HEK293 (cell line): ENCODE measurements at regions of chr7 and their contacts with region 1.

Region 1: DNA sequence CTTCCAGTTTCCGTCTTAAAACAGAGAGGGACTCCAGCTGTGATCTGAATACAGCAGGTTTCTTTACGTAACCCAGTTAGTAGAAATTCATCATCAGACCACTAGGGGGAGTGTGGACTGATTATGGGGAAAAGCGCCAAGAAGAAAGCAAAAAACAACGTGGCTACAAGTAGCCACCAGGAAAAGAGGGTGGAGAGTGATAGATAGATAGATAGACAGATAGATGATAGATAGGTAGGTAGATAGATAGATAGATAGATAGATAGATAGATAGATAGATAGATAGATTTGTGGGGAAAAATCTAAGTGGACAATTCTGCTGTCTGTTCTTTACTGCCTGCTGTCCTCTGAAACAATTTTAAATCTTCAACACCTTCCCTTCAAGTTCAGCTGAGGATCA is 12.7 kb upstream of the AKR1B10 start:
- H3K4me3 ChIP-seq: no peak overlapping the region
- H3K27ac ChIP-seq: no peak overlapping the region
- H3K4me1 ChIP-seq: no peaks in the 10 kb centered on the region
- CTCF ChIP-seq: peak; percentile 66; the same call in 1 of the 2 replicates

Region 2: DNA sequence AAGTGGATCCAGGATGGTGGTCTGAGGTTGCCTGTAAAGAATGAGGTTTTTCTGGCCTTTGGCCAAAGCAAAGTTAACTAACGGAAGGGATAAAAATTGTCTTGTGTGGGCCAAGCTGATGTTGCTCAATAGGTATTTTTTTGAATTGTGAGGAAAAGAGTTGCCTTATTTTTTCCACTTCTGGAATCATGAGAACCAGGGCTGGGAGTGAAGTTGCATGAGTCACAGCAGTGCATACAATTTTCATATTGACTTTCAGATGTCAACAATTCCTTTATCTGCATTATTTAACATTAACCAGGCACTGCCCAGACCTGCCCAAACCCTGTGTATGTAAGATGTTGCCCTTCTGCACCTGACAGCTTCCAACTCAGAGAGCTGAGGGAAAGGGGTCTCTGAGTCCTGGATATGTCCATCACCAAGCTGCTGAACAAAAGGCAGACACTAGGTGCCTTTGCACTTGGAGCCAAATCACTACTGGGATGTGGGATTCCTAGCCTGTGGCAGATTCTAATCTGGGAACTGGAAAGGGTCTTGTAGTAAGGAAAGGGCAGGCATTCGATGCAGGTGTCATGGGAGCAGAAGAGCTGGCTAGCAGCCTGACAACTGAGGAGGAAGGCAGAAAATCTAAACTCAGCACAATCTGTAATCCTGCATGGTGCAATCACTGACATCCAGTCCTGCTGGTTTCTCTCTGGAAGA is 145.7 kb before region 1 on chr7:
- CTCF ChIA-PET with region 1: no interaction called
- POLR2A ChIA-PET with region 1: no interaction called
- H3K4me3 ChIP-seq: no peak overlapping the region
- H3K27ac ChIP-seq: no peak overlapping the region
- H3K4me1 ChIP-seq: no peaks in the 10 kb centered on the region
- CTCF ChIP-seq: no peak

Region 3: GRCh38 chr7:134458806-134459698 is 55.6 kb before region 1 on chr7 and contains the start of gene AKR1B1:
- CTCF ChIA-PET with region 1: interaction called, 10 read pairs
- POLR2A ChIA-PET with region 1: no interaction called
- H3K4me3 ChIP-seq: peak within 1 kb of the TSS; percentile 82
- H3K27ac ChIP-seq: peak within 1 kb of the TSS; percentile 56; the same call in 1 of the 2 replicates
- H3K4me1 ChIP-seq: no peaks in the 10 kb centered on the region
- CTCF ChIP-seq: peak; percentile 88

Region 4: GRCh38 chr7:134547397-134548054 is 32.9 kb after region 1 on chr7:
- CTCF ChIA-PET with region 1: interaction called, 30 read pairs
- POLR2A ChIA-PET with region 1: no interaction called
- H3K4me3 ChIP-seq: peak overlapping the region; percentile 30
- H3K27ac ChIP-seq: no peak overlapping the region
- H3K4me1 ChIP-seq: no peaks in the 10 kb centered on the region
- CTCF ChIP-seq: peak; percentile 69

Region 5: DNA sequence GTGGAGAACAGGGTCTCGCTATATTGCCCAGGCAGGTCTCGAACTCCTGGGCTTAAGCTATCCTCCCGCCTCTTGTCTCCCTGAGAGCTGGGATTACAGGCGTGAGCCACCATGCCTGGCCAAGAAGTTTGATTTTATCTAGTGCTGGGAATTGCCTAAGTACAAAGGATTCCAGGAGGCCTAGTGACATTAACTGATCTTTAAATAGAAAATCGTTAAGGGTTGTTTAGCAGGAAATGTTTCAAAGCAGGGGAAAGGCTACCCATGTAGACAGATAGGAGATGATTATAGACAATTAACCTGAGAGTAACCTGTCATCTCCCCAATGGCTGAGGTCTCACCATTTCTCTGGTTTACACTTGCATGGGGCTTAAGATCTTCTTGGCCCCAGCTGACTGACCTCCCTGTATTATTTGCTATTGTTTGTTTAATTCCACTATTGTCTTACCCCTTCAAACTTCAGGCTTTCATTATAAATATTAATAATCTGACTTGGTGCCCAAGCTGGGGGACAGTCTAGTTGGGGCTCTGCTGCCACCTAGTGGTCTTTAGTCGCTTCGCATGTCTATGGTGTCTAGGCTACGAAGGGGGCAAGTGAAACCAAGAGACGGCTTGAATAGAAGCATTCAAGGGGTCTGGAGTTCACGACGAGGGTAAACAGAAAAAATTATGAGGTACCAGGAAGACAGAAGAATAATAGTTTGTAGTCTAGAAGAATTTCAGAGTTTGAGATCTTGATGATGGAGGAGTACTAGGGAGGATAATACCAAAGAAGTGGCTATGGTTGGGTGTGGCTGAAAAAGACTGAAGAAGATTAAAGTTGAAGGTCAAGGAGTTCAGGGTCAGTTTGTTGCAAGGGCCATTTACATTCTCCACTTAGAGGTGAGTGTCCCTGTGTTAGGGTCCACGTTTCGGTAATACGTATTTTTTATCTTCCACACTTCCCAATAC is 91.6 kb after region 1 on chr7:
- CTCF ChIA-PET with region 1: interaction called, 63 read pairs
- POLR2A ChIA-PET with region 1: no interaction called
- H3K4me3 ChIP-seq: no peak overlapping the region
- H3K27ac ChIP-seq: no peak overlapping the region
- H3K4me1 ChIP-seq: no peaks in the 10 kb centered on the region
- CTCF ChIP-seq: peak; percentile 57

Region 6: GRCh38 chr7:134920026-134920753 is 405.5 kb after region 1 on chr7:
- CTCF ChIA-PET with region 1: no interaction called
- POLR2A ChIA-PET with region 1: no interaction called
- H3K4me3 ChIP-seq: no peak overlapping the region
- H3K27ac ChIP-seq: no peak overlapping the region
- H3K4me1 ChIP-seq: no peaks in the 10 kb centered on the region
- CTCF ChIP-seq: no peak

Region 7: DNA sequence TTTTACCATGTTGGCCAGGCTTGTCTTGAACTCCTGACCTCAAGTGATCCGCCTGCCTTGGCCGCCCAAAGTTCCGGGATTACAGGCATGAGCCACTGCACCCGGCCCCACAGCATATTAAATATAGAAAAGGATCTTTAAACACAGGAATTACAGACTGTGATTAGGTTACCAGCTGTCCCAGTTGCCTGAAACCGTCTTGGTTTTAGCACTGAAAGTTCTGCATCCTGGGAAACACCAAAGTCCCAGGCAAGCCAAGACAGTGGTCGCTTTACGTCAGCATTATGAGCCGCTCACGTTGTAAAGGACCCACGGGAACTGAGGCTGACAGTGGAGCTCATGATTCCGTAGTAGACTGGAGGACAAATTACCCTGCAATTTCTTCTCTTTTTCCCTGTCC is 1302.9 kb after region 1 on chr7:
- CTCF ChIA-PET with region 1: no interaction called
- POLR2A ChIA-PET with region 1: no interaction called
- H3K4me3 ChIP-seq: no peak overlapping the region
- H3K27ac ChIP-seq: no peak overlapping the region
- H3K4me1 ChIP-seq: no peaks in the 10 kb centered on the region
- CTCF ChIP-seq: no peak